ENCODE measurements at regions of chrX and their contacts with region 1.

Region 1: GRCh38 chrX:103773445-103774046 is 3.1 kb upstream of the PLP1 start:
- DNase-seq: no peak
- ATAC-seq: no peak

Region 2: GRCh38 chrX:103825881-103826280 is 52.3 kb after region 1 on chrX:
- intact Hi-C with region 1: loop called (anchors 2 kb)
- DNase-seq: no peak
- ATAC-seq: no peak

Region 3: DNA sequence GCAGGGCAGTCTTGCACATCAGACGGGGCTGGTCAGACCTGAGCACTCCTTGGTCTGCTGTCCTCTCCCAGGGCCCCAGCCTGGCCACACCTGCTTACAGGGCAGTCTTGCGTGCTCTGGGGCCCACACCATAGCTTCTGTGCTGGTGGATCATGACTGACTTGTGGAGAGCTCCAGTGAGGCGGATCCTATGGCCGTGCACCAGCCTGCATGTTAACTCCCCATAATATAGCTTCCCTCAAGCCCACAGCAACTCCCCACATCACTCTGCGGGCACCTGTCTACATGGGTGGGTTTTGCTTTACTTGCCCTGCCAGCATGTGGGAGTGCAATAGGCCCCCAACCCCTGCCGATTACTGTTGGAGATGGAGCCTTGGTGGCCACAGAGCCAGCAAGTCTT is 180.7 kb after region 1 on chrX:
- intact Hi-C with region 1: no loop called
- DNase-seq: no peak
- ATAC-seq: no peak

Measured in sciatic nerve (tissue), 2 donors.